Heart left ventricle (tissue), 16 donors: ENCODE measurements at regions of chr7 and their contacts with region 1.

Region 1: GRCh38 chr7:111953611-111954010 is 252.6 kb downstream of the DOCK4 start:
- DNase-seq: peak in 1 of 5 donors; percentile 15
- ATAC-seq: peak; percentile 75 to 82 (median 79)
- H3K4me3 ChIP-seq: no peak overlapping the region
- H3K27ac ChIP-seq: peak overlapping the region in 3 of 12 donors; percentile 5 to 77 (median 63)
- H3K4me1 ChIP-seq: peaks cover 0 to 42% (median 22%) of the 10 kb centered on the region in 12 donors
- H3K27me3 ChIP-seq: no peaks in the 10 kb centered on the region
- CTCF ChIP-seq: peak in 9 of 12 donors; percentile 23 to 41 (median 30)
- POLR2A ChIP-seq: no peak

Region 2: DNA sequence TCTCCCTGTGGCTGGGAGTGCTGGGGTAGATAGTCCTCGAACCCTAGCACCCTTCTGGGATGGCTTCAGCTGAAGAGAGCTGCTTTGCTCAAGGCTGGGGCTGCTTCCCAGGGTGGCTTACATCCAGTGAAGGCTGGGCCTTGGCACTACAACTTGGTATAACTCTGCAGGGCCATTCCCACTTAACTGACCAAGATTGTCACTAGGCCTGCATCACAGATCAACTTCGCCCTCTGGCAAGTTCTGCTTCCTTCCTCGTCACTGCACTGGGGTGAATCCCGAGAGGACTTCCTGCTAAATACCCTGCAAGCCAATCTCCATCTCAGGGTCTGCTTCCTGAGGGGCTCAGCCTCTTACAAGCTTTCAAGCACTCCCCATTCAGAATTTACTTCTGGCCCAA is 57.4 kb after region 1 on chr7:
- intact Hi-C with region 1: loop called in 1 of 10 experiments (anchors 10 kb)
- DNase-seq: peak in 1 of 5 donors; percentile 20
- ATAC-seq: peak; percentile 54 to 68 (median 57)
- H3K4me3 ChIP-seq: no peak overlapping the region
- H3K27ac ChIP-seq: peak overlapping the region in 2 of 12 donors; percentile 1 to 4
- H3K4me1 ChIP-seq: peaks cover 0 to 30% (median 21%) of the 10 kb centered on the region in 12 donors
- H3K27me3 ChIP-seq: no peaks in the 10 kb centered on the region
- CTCF ChIP-seq: no peak
- POLR2A ChIP-seq: no peak

Region 3: DNA sequence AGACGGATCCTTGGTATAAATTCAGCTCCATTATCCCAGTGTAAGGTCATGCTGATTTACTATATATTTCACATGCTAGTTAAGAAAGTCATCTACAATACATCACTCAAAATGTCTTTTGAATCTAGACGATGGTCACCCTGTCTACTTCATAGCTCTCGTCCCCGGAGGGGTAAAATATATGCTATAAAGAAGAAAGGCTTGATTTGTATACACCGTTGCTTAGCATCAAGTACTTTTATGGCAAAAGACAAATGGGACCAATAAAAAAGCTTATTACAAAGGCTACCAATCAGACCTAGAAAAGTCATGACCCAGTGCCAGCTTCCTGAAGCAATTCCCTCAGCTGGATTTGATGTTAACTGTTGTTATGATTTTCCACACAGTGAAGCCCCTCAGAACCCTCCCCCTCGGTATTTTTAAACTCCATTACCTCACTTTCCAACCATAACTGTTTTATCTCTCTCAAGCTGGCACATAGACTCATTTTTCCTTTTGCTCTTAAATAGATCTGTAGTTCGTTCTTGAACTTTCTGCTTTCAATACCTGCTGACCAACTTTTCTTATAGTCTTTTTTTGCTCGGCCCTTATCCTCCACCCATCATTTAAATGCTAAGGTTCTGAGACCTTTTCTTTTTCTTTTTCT is 147.7 kb after region 1 on chr7:
- intact Hi-C with region 1: no loop called
- DNase-seq: no peak
- ATAC-seq: peak in 3 of 4 donors; percentile 38 to 58 (median 41)
- H3K4me3 ChIP-seq: no peak overlapping the region
- H3K27ac ChIP-seq: peak overlapping the region in 1 of 12 donors; percentile 4
- H3K4me1 ChIP-seq: peaks cover 0 to 25% (median 4%) of the 10 kb centered on the region in 12 donors
- H3K27me3 ChIP-seq: no peaks in the 10 kb centered on the region
- CTCF ChIP-seq: no peak
- POLR2A ChIP-seq: no peak

Region 4: DNA sequence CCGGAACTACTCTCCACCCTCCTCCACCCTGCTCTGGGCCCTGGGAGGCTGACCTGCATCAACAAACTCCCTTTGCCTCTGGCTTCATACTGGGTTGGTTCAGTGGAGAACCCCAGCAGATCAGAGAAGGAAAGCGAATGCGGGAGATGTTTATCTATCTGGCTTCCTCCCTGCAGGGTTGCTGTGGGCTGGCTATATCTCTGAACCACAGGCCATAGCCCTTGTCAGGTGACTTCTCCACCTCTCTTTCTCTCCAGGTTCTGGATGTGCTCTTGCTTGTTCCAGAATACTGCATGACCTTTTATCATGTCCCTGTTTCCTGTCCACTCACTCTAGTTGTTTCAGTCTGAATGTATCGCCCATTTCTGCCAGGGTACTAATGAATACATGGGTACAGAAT is 444.9 kb after region 1 on chr7:
- intact Hi-C with region 1: loop called in 1 of 10 experiments (anchors 10 kb)
- DNase-seq: no peak
- ATAC-seq: no peak
- H3K4me3 ChIP-seq: no peak overlapping the region
- H3K27ac ChIP-seq: no peak overlapping the region
- H3K4me1 ChIP-seq: no peaks in the 10 kb centered on the region
- H3K27me3 ChIP-seq: peaks cover 0 to 8% (median 0%) of the 10 kb centered on the region in 9 donors
- CTCF ChIP-seq: no peak
- POLR2A ChIP-seq: no peak